ENCODE measurements at regions of chr11 and their contacts with region 1.

Region 1: DNA sequence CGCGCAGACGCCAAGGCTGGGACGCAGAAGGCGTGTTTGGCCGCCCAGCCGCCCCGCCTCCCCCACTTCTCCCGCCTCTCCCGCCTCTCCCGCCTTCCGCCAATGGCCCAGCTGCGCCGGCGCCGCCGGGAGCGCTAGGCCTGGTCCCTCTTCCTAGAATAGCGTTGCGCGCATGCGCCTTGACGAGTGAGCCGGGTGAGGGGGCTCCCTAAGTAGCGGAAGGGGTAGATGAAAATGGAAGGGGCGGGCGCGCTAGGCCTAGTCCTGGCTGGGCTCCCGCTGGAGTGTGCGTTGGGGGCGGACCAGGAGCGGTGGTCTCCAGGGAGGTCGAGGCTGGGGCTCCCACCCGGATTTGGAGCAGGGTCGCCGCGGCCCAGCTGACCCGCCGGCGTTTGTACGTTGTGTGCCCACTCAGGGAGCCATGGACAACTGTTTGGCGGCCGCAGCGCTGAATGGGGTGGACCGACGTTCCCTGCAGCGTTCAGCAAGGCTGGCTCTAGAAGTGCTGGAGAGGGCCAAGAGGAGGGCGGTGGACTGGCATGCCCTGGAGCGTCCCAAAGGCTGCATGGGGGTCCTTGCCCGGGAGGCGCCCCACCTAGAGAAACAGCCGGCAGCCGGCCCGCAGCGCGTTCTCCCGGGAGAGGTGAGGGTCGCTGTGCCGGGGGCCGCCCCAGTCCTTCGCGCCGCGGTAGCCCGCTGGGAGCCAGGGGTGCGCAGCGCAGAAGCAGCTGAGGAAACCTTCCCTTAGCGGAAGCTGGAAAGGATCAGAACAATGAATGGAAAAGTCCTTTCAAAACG is at the start of gene AKIP1:
- DNase-seq: peak; percentile 91
- H3K4me3 Mint-ChIP-seq: peak within 1 kb of the TSS; percentile 94
- H3K27ac Mint-ChIP-seq: peak within 1 kb of the TSS; percentile 86
- H3K4me1 Mint-ChIP-seq: peaks cover 45% of the 10 kb centered on the region
- H3K27me3 Mint-ChIP-seq: no peaks in the 10 kb centered on the region
- total RNA-seq, gene AKIP1: 37.9 to 39.9 TPM

Region 2: DNA sequence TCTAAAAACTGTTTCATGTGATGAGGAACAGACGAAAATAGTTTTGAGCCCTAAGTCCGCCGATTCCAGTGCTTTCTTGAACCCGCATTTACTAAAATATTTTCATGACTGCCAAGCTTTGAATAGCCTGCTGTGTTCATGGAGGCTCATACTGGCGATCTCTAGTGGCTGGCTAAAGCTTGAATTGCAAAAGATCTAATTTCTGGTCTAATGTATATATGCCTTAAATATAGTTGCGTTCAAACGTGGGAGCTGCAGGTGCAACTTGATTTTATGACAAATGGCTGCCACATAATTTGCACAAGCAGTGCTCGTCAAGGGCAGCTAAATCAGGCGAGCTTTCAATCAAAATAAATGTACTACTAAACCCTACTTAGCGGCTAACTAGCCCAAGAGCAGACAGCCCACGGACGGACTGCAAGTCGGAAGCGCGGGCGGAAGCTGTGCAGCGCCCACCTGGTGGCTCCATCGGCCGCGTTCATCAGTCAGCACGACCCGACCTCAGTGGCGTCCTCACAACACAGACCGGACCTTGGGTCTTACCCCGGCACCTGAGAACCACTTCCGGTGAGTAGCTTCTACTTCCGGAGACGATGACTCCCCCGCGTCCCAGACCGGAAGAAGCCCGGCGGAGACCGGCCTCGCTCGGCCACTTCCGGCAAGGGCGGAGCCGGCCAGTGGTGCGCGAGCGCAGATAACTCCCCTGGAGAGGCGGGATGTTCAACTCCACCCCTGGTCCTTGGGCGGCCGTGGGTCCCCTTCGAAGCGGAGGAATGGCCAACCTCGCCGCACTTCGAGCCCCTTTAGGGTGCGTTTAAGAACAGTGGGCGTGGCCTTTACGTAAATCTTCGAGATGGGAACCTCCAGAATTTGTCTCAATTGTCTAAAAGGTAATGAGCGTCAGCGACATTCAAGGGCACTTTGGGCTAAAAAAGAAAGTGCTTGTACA is 222.5 kb before region 1 on chr11:
- CTCF ChIA-PET with region 1: no interaction called
- POLR2A ChIA-PET with region 1: no interaction called
- intact Hi-C with region 1: loop called (anchors 2 kb)
- DNase-seq: peak; percentile 94
- H3K4me3 Mint-ChIP-seq: peak overlapping the region; percentile 97
- H3K27ac Mint-ChIP-seq: peak overlapping the region; percentile 88
- H3K4me1 Mint-ChIP-seq: peaks cover 57% of the 10 kb centered on the region
- H3K27me3 Mint-ChIP-seq: no peaks in the 10 kb centered on the region

Region 3: DNA sequence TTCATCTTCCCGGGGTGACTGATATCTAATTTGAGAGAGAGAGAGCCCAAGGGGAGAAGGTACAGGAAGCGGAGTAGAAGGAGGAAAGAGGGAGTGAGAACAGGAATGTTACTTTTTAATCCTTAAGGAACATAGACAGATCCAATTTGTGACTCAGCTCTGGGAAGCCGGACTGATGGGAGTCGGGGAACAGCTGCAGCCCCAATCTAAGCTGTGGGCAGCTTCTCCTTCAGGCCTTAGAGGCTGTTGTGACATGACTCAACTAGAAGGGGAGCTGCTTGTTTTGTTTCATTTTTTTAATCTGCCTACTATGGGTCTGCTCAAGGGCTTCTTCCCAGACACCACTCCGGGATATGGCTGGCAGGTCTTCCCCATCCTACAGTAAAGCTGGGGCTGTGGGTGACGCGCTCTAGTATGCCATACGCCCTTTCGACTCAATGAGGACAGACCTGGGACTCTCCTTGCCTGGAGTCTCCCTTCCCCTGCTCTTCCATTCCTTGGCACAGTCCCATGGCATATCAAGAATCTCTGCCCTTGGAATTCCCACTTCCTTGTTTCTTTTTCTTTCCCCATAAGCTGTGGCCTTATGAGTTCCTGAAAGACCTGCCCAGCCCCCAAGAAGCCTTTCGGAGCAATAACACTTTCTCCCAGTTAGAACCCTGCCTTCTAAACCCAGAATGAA is 103.5 kb before region 1 on chr11:
- CTCF ChIA-PET with region 1: no interaction called
- POLR2A ChIA-PET with region 1: no interaction called
- intact Hi-C with region 1: no loop called
- DNase-seq: no peak
- H3K4me3 Mint-ChIP-seq: no peak overlapping the region
- H3K27ac Mint-ChIP-seq: no peak overlapping the region
- H3K4me1 Mint-ChIP-seq: peaks cover 5% of the 10 kb centered on the region
- H3K27me3 Mint-ChIP-seq: peaks cover 19% of the 10 kb centered on the region

Region 4: DNA sequence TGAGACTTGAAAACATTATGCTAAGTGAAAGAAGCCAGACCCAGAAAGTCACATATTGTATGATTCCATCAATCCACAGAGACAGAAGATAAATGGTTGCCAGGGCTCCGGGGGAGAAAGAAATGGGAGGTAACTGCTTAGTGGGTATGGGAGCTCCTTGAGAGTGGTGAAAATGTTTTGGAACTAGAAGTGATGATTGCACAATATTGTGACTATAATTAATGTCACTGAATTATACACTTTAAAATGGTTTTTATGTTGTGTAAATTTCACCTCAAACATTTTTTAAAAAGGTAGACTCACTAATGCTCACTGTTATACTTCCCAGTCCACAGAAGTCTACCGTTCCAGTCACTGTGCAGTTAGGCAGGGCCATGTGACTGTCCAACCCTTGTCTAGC is 32.5 kb before region 1 on chr11:
- CTCF ChIA-PET with region 1: no interaction called
- POLR2A ChIA-PET with region 1: no interaction called
- intact Hi-C with region 1: no loop called
- DNase-seq: no peak
- H3K4me3 Mint-ChIP-seq: no peak overlapping the region
- H3K27ac Mint-ChIP-seq: no peak overlapping the region
- H3K4me1 Mint-ChIP-seq: no peaks in the 10 kb centered on the region
- H3K27me3 Mint-ChIP-seq: peaks cover 9% of the 10 kb centered on the region

Region 5: DNA sequence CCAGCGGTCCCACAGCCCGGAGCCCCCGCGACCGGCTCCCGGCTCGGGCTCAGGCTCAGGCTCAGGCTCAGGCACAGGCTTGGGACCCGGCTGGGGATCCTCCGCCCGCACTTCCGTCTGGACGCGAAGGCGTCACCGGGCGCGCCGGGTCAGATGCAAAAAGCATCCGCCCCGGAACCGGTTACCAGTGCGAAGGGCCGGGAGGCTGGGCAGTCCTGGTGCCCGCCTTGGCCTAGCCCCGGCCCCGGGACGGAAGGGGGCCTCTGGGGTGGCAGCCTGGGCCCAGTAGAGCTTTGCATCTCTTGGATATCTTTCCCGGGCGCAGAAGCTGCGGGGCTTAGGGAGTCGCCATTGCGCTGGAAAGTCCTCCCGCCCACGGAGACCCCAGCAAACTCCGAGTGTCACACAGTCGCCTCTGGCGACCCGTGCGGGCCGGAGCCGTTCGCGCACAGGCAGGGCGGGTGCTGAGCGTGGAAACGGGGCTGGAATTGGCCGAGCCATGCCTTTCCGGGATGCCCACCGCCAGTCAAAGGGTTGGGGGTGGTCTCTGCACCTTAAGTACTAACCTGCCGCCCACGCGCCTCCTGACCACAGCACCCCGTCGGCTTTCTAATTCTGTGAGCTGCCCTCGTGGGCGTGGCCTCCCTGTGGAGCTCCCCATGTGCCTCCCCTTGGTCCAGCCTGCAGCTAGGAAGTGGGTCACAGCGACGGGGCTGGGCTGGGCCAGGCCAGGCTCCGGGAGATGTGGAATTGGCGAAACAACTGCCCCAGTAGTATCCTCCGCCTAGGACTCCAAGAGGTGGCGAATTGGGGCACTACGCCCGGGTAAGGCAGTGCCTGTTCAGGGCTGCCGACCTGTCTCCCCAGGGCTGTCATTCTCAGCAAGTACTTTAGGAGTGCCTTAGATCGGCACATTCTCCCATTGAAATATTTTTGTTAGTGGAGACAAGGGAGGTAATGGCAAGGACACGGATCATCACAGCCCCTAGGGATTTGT is 53.4 kb after region 1 on chr11 and contains the start of gene TMEM9B:
- CTCF ChIA-PET with region 1: interaction called, 62 read pairs
- POLR2A ChIA-PET with region 1: interaction called, 9 read pairs
- intact Hi-C with region 1: loop called (anchors 1 kb)
- DNase-seq: peak; percentile 90
- H3K4me3 Mint-ChIP-seq: peak within 1 kb of the TSS; percentile 94
- H3K27ac Mint-ChIP-seq: peak within 1 kb of the TSS; percentile 90
- H3K4me1 Mint-ChIP-seq: peaks cover 32% of the 10 kb centered on the region
- H3K27me3 Mint-ChIP-seq: no peaks in the 10 kb centered on the region
- total RNA-seq, gene TMEM9B: 17.5 to 19.1 TPM

Region 6: GRCh38 chr11:9015677-9016076 is 104.4 kb after region 1 on chr11:
- CTCF ChIA-PET with region 1: interaction called, 11 read pairs
- POLR2A ChIA-PET with region 1: interaction called, 5 read pairs
- intact Hi-C with region 1: no loop called
- DNase-seq: peak; percentile 70
- H3K4me3 Mint-ChIP-seq: no peak overlapping the region
- H3K27ac Mint-ChIP-seq: no peak overlapping the region
- H3K4me1 Mint-ChIP-seq: peaks cover 18% of the 10 kb centered on the region
- H3K27me3 Mint-ChIP-seq: no peaks in the 10 kb centered on the region

Region 7: DNA sequence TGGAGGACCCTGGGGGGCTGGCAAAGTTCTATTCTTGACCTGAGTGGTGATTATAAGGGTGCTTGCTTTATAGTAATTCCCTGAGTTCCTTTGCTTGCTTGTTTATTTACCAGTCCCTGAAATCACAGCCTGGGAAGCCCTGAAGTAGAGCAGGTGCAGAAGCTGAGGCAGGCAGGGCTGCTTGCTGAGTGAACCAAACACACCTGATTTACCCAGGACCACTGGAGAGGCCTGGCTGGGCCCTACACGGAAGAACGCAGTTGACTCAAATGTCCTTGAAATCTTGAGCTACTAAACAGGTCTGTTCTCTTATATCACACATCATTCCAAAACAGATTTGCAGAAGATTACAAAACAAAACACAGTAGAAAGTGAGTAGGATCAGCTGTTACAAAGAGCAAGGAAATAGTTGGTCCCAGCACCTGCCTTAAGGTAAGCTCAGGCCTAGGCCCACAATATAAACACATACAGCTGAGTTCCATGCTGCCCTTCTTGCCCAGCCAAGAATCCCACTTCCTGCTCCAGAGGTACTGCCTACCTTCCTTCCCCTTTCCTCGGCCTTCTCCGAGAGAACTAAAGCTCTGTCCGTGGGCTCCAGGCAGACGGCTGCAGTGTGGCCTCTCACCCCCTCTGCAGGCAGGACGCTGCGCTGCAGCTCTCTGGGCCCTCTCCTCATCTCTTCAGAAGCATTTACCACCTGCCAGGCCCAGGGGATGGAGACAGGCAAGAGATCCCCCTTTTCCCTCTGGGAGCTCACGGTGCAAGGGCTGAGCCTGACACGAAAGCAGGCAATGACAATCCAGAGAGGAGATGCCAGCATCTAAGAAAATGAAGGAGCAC is 226.3 kb after region 1 on chr11:
- CTCF ChIA-PET with region 1: interaction called, 32 read pairs
- POLR2A ChIA-PET with region 1: no interaction called
- intact Hi-C with region 1: loop called (anchors 1 kb)
- DNase-seq: peak; percentile 83
- H3K4me3 Mint-ChIP-seq: no peak overlapping the region
- H3K27ac Mint-ChIP-seq: peak overlapping the region; percentile 10
- H3K4me1 Mint-ChIP-seq: peaks cover 32% of the 10 kb centered on the region
- H3K27me3 Mint-ChIP-seq: no peaks in the 10 kb centered on the region

Region 8: GRCh38 chr11:9506489-9507276 is 595.5 kb after region 1 on chr11:
- CTCF ChIA-PET with region 1: no interaction called
- POLR2A ChIA-PET with region 1: no interaction called
- intact Hi-C with region 1: loop called (anchors 5 kb)
- DNase-seq: peak; percentile 82
- H3K4me3 Mint-ChIP-seq: no peak overlapping the region
- H3K27ac Mint-ChIP-seq: no peak overlapping the region
- H3K4me1 Mint-ChIP-seq: peaks cover 11% of the 10 kb centered on the region
- H3K27me3 Mint-ChIP-seq: no peaks in the 10 kb centered on the region